ENCODE measurements at regions of chr20 and their contacts with region 1.

Region 1: GRCh38 chr20:44861531-44862006 is 23.9 kb upstream of the YWHAB start:
- DNase-seq: peak; percentile 88
- H3K4me3 ChIP-seq: no peak overlapping the region
- H3K27ac ChIP-seq: peak overlapping the region; percentile 65
- H3K4me1 ChIP-seq: peaks cover 29% of the 10 kb centered on the region
- H3K27me3 ChIP-seq: no peaks in the 10 kb centered on the region

Region 2: DNA sequence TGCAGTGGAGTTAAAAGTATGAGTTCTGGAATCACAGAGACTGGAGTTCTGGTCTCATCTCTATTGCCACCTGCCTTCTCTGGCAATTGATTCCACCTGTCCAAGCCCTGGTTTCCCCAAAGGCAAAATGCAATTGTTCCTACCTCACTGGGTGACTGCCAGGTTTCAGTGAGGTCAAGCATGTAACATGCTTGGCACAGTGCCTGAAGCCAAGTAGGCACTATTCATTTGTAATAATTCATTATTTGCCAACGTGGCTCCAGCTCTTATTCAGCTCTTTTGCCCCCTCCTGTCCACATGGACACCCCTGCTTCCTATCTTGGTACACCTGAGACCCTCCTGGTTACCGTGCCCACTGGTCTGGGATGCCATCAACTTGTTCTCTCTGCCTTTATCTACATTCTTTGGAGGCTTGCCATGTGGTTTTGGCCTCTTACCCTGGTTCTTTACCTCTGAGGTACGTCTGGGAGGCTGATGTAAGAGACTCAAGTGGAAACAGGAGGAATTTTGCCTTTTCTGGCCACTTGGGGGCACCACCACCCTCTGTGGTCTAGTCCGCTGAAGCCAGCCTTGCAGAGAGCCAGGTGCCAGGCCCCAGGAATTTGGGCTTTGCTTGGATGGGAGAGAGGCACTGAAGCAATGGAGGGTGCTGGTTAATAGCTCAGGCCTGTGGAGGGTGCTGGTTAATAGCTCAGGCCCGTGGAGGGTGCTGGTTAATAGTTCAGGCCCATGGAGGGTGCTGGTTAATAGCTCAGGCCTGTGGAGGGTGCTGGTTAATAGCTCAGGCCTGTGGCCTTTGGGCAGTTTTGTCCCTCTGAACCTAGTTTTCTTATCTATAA is 114.2 kb before region 1 on chr20:
- in situ Hi-C with region 1: loop called (anchors 10 kb)
- DNase-seq: peak; percentile 82
- H3K4me3 ChIP-seq: peak overlapping the region; percentile 76; the same call in 1 of the 2 replicates
- H3K27ac ChIP-seq: no peak overlapping the region
- H3K4me1 ChIP-seq: no peaks in the 10 kb centered on the region
- H3K27me3 ChIP-seq: peaks cover under 1% of the 10 kb centered on the region

Measured in GM23248 (cell line).